ENCODE measurements at regions of chr2 and their contacts with region 1.

Region 1: DNA sequence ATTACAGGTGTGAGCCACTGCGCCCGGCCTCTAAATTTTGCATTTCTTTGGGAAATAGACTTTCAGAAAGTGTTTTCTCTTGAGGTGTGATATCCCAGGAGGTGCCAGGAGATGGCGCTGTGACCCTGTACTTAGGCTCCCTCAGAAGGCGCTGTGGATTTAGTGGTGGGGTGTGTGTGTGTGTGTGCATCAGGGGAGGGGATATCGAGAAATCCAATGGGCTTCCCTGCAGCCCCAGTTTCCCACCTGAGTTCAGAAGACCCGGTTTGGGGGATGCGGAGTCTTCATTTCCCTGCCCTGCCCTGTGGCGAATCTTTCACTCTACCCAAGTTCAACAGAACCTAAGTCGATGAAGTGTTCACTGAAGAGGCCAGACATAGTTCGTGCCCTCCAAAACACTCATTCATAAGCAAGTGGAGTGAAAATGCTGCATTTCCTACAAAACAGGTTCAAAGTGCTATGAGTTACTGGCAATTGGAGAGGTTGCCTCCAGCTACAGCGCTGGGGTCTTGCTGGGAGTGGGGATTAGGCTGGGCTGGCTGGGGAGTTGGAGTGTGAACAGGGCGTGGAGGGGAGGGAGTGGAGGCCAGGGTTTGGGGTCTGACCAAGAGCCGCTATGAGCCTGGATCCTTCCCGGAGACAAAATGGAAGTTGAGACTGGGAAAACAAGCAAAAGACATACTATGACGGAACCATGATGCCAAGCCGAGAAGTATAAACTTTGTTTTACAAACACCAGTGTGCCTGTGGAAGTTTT is 6.5 kb upstream of the WNT6 start:
- DNase-seq: peak; percentile 64
- ATAC-seq: peak; percentile 90
- H3K4me3 Mint-ChIP-seq: no peak overlapping the region
- H3K27ac Mint-ChIP-seq: no peak overlapping the region
- H3K4me1 Mint-ChIP-seq: no peaks in the 10 kb centered on the region
- H3K27me3 Mint-ChIP-seq: peaks cover 53% of the 10 kb centered on the region
- CTCF ChIP-seq: no peak

Region 2: DNA sequence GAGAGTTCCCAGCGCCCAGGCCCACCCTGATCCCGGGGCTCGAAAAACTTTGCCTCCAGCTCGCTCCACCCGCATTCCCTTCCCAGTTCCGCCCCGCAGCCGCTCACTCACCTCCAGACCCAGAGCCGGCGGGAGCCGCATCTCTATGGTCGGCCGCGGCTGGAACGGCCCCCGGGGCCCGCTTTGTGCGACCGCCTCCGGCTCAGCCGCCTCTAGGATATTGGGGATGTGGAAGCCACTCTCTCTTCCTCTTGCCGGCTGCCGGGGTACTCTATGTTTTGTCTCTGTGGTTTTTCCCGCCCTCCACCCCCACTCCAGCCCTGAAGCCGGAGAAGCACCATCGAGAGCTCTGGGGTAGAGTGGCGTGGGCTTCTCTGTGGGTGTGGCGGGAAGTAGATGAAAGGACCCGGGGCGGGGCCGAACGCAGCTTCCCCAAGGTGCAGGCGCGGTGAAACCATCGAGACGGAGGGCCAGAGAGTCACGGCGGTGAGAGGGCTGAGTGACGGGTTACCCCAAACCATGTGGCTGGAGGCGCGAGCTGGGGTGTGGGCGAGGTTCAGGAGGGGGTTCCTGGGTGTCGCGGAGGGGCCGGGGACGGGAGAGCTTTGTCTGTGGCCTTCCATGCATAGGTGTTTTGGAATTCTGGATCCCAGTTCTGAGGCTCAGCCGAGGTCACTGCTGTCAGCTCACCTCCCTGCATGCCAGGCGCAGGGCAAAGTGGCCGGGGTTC is 193.7 kb before region 1 on chr2 and contains the starts of genes BCS1L and ZNF142:
- CTCF ChIA-PET with region 1: interaction called, 27 read pairs
- POLR2A ChIA-PET with region 1: interaction called, 11 read pairs
- intact Hi-C with region 1: no loop called
- DNase-seq: peak; percentile 85
- ATAC-seq: peak; percentile 96
- H3K4me3 Mint-ChIP-seq: peak within 1 kb of the TSS; percentile 99
- H3K27ac Mint-ChIP-seq: peak within 1 kb of the TSS; percentile 93
- H3K4me1 Mint-ChIP-seq: peaks cover 31% of the 10 kb centered on the region
- H3K27me3 Mint-ChIP-seq: no peaks in the 10 kb centered on the region
- CTCF ChIP-seq: no peak
- total RNA-seq, gene BCS1L: 66.9 and 75.1 TPM in 2 replicates
- total RNA-seq, gene ZNF142: 44.9 and 63.6 TPM in 2 replicates

Region 3: DNA sequence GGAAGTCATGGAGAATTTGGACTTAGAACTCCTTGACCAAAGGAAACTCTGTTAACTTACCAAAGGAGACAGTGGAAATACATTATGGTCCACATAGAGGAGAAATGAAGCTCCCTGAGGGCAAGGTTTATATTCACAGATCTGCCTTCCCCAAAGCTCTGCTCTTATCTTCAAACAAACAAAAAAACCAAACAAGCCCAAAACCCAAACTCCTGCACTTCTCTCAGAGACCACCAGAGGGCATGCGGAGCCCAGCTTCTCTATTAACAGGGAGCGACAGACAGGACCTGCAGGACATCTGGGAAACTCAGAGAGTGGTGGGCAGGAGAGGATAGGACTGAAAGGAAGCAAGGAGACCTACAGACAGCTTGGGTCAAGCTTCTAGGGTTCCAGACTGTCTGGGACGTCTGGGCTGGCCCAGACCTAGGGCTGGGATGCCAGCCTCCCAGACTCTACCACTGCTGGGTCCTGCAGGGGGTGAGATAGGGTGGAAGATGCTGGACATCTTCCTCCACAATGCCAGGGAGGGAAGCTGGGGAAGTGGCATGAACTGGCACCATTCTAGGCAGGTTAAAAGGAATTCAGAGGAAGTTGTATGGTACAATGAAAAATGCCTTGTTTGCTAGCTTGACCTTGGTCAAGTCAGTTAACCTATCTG is 23.6 kb after region 1 on chr2:
- CTCF ChIA-PET with region 1: interaction called, 9 read pairs
- POLR2A ChIA-PET with region 1: interaction called, 3 read pairs
- intact Hi-C with region 1: loop called (anchors 1 kb)
- DNase-seq: peak; percentile 58
- ATAC-seq: no peak
- H3K4me3 Mint-ChIP-seq: no peak overlapping the region
- H3K27ac Mint-ChIP-seq: no peak overlapping the region
- H3K4me1 Mint-ChIP-seq: peaks cover 55% of the 10 kb centered on the region
- H3K27me3 Mint-ChIP-seq: peaks cover 19% of the 10 kb centered on the region
- CTCF ChIP-seq: peak; percentile 65

Region 4: DNA sequence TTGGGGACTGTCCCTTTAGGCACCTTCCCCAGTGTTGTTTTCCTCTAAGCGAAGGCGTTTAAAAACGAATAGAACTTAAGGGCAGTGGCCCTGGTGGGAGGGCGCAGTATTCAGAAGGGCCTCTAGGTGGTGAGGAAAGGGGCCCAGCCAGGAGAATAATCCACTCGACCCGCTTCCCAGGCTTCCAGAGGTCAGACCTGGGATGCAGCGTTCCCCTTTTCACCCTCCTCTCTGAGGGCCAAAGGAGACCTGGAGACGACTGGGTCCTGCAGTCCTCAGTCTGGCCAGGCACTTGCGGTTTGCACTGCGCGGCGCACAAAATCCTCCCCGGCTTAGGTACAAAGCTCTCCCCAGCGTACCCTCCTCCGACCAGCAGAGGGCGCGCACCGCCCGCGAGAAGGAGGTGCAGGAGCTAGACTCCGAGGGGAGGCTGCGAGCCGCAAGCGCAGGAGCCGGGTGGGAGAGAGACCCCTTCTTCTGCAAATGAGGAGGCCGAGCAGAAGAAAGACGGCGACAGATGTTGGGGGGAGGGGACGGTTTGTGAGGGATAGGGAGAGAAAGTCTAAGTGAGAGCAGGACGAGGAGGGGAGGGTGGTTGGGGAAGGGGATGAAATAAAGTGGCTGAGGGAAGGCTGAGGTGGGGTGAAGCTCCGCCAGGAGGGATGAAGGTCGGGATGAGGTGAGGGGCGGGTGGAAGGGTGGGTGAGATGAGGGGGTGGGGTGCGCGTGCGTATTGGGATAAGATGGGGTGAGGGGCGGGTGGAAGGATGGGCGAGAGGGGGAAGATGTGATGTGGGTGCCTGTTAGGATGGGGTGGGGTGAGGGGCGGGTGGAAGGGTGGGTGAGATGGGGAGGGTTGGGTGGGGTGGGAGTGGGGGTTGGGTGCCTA is 127.0 kb after region 1 on chr2:
- CTCF ChIA-PET with region 1: interaction called, 6 read pairs
- POLR2A ChIA-PET with region 1: interaction called, 8 read pairs
- intact Hi-C with region 1: loop called (anchors 1 kb)
- DNase-seq: peak; percentile 78
- ATAC-seq: peak; percentile 93
- H3K4me3 Mint-ChIP-seq: peak overlapping the region; percentile 71
- H3K27ac Mint-ChIP-seq: no peak overlapping the region
- H3K4me1 Mint-ChIP-seq: peaks cover 28% of the 10 kb centered on the region
- H3K27me3 Mint-ChIP-seq: peaks cover 56% of the 10 kb centered on the region
- CTCF ChIP-seq: peak; percentile 78

Region 5: GRCh38 chr2:219029829-219030165 is 176.7 kb after region 1 on chr2:
- CTCF ChIA-PET with region 1: no interaction called
- POLR2A ChIA-PET with region 1: no interaction called
- intact Hi-C with region 1: loop called (anchors 1 kb)
- DNase-seq: peak; percentile 65
- ATAC-seq: peak; percentile 87
- H3K4me3 Mint-ChIP-seq: no peak overlapping the region
- H3K27ac Mint-ChIP-seq: no peak overlapping the region
- H3K4me1 Mint-ChIP-seq: no peaks in the 10 kb centered on the region
- H3K27me3 Mint-ChIP-seq: peaks cover 35% of the 10 kb centered on the region
- CTCF ChIP-seq: no peak

Region 6: DNA sequence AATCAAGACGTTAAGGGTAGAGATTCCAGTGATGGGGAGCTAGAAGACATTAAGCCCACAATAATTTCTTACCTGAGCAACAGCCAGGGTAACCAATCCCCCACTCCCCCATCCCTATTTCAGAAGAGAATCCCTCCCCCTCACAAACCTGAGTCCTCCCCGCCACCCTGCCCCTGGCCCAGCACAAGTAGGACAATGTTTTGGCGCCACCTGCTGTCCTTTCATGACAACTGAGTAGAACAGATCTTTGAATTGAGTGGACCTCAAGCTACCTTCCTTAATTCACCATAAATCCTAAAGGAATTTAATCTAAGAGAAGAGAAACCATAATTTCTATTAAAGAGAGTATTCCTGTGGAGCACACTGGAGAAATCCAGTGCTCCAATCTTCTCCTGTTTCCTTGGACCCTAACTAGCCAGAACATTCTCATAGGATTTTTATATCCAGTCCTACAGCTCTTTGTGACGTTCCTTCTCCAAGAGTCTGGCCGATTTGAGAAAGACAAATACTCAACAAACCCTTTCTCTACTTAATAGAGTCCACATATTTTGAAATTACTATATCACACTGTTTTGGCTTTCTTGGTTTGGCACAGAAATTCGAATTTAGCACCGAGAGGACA is 266.4 kb after region 1 on chr2:
- CTCF ChIA-PET with region 1: interaction called, 10 read pairs
- POLR2A ChIA-PET with region 1: no interaction called
- intact Hi-C with region 1: loop called (anchors 1 kb)
- DNase-seq: peak; percentile 27
- ATAC-seq: peak; percentile 50
- H3K4me3 Mint-ChIP-seq: no peak overlapping the region
- H3K27ac Mint-ChIP-seq: no peak overlapping the region
- H3K4me1 Mint-ChIP-seq: no peaks in the 10 kb centered on the region
- H3K27me3 Mint-ChIP-seq: no peaks in the 10 kb centered on the region
- CTCF ChIP-seq: no peak

Region 7: DNA sequence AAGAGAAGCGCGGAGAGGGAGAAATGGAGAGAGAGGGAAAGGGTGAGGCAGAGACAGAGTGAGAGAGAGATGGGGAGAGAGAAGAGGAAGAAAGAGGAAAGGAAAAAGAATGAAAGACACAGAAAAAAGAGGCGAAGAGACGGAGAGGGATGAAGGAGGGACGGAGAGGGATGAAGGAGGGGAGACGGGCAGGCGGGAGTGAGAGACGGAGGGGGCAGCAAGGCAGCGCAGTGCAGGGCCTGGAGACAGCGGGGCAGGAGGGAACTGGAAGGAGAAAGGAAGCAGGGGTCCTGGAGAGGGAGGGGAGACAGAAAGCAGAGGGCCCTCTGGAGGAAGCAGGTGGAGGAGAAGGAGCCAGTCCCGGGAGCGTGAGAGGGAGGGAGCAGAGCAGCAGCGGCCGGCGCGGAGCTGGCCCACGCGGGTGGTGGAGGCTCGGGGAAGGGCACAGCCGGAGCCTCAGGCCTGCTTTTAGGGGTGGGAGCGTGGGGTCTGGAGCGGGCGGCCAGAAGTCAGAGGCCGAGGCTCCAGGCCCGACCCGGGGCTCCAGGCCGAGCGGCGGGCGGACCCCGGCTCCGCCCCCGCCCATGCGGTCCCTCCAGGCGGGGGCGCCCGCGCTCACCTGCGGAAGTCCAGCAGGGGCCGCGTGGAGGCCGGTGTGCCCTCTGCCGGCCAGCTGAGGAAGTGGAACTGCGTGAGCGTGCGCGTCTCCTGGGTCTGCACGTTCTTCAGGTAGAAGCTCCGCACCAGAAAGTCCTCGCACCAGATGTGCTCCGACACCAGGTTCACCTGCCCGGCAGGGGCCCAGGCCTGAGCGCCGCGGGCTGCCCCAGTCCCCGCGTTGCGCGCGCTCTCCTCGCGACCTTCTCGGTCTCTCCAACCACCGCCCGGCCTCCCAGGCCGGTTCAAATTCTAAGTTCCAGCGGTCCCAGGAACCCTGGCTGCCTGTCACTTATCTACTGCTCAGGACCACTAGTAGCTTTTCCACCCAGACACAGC is 441.6 kb after region 1 on chr2:
- CTCF ChIA-PET with region 1: no interaction called
- POLR2A ChIA-PET with region 1: no interaction called
- intact Hi-C with region 1: loop called (anchors 5 kb)
- DNase-seq: peak; percentile 91
- ATAC-seq: peak; percentile 95
- H3K4me3 Mint-ChIP-seq: peak overlapping the region; percentile 78
- H3K27ac Mint-ChIP-seq: peak overlapping the region; percentile 65
- H3K4me1 Mint-ChIP-seq: peaks cover 24% of the 10 kb centered on the region
- H3K27me3 Mint-ChIP-seq: peaks cover 6% of the 10 kb centered on the region
- CTCF ChIP-seq: peak; percentile 64